ENCODE measurements at regions of chr11 and their contacts with region 1.

Region 1: DNA sequence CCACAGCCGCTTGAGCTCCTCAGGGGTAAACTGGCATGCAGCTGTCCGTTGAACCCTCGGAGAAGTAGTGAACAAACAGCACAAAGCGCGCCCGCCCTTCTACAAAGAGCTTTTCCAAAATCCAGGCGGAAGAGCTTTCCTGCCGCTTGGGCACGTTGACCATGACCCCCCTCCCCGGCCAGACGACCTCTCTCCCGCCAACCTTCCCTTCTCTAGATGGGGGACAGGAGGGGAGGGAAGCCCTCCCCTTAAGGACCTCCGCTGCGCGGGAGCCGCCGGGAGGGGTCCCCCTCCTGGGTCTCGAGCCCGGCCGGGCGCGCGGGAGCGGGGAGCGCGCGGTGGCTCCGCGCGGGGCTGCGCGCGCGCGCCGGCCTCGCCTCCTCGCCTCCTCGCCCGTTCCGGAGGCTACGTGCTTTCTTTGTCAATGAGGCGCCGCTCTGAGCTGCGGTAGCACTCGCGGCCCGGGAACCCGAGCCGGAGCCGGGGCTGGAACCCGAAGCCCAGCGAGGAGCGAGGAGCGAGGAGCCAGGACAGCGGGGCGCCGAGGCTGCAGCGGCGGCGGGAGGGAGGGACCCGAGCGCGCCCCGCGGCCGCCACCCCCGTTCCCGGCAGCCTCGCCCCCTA is 118.6 kb downstream of the HIPK3 start:
- DNase-seq: no peak
- ATAC-seq: no peak
- H3K4me3 ChIP-seq: peak within 1 kb of the TSS in 9 of 10 donors; percentile 33 to 53 (median 46)
- H3K27ac ChIP-seq: no peak within 1 kb of the TSS
- H3K4me1 ChIP-seq: peaks cover 0 to 12% (median 5%) of the 10 kb centered on the region in 9 donors
- H3K27me3 ChIP-seq: peaks cover 0 to 62% (median 33%) of the 10 kb centered on the region in 7 donors
- CTCF ChIP-seq: no peak

Region 2: DNA sequence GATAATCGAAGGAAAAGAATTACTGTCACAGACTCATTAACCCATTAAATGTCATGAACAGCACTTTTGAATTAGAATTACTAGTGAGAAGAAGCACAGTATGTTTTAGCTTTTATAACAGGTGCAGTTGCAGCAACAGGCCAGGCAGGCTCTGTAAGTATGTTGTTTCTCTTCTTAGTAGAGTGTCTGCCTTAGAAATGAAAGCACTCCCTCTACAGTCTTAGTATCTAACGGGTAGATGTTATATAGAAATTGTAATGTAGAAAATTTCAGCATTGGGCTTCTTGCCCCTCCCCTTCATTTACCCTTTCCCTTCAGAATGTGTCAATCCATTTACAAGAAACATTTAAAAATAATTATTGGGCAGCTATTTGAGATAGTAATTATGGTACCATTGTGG is 31.2 kb before region 1 on chr11:
- intact Hi-C with region 1: no loop called
- DNase-seq: no peak
- ATAC-seq: peak in 5 of 8 donors; percentile 37 to 63 (median 48)
- H3K4me3 ChIP-seq: no peak overlapping the region
- H3K27ac ChIP-seq: no peak overlapping the region
- H3K4me1 ChIP-seq: peaks cover 0 to 23% (median 0%) of the 10 kb centered on the region in 9 donors
- H3K27me3 ChIP-seq: no peaks in the 10 kb centered on the region
- CTCF ChIP-seq: peak in 7 of 9 donors; percentile 7 to 50 (median 22)

Region 3: GRCh38 chr11:33525789-33526188 is 150.0 kb after region 1 on chr11:
- intact Hi-C with region 1: loop called in 1 of 10 experiments (anchors 5 kb)
- DNase-seq: no peak
- ATAC-seq: no peak
- H3K4me3 ChIP-seq: no peak overlapping the region
- H3K27ac ChIP-seq: no peak overlapping the region
- H3K4me1 ChIP-seq: no peaks in the 10 kb centered on the region
- H3K27me3 ChIP-seq: no peaks in the 10 kb centered on the region
- CTCF ChIP-seq: no peak